GM18951 (cell line): ENCODE measurements at regions of chr2 and their contacts with region 1.

Region 1: GRCh38 chr2:200713003-200713703 is 98.6 kb upstream of the BZW1 start:
- POLR2A ChIP-seq: peak; percentile 90

Region 2: GRCh38 chr2:199955339-199956261 is 757.6 kb before region 1 on chr2 and contains the starts of genes MAIP1 and TYW5:
- in situ Hi-C with region 1: loop called (anchors 25 kb)
- POLR2A ChIP-seq: peak; percentile 87

Region 3: GRCh38 chr2:200340508-200341224 is 372.5 kb before region 1 on chr2:
- in situ Hi-C with region 1: no loop called
- POLR2A ChIP-seq: no peak

Region 4: DNA sequence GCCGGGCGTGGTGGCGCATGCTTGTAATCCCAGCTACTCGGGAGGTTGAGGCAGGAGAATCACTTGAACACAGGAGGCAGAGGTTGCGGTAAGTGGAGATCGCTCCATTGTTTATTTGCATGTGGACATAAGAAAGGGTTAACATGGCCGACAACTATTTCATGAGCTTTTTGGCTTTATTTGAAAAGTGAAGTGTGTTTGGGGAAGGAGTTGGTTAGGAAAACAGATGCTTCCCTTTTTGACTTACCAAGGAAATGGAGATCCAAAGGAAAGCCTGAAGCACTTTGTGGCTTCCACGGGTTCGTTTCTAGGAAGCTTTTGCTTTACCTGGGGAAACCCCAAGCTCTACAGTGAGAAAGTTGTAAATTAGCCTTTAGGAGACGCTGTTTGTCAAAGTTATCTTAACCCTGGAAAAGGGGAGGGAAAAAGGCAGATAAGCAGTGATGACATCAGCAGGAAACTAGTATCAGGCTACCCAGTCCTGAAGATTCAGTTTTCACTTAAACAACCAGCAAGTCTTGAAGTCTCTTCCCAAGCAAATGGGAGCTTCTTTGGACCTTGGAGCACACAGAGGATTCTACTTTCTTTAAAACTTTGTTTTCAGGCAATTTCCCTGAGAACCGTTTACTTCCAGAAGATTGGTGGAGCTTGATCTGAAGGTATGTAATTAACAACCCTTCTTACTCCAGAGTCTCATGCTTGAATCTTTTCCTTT is 469.7 kb after region 1 on chr2 and contains the start of gene CASP10:
- in situ Hi-C with region 1: loop called (anchors 25 kb)
- POLR2A ChIP-seq: peak; percentile 44